AG04449 (cell line): ENCODE measurements at regions of chr3 and their contacts with region 1.

Region 1: DNA sequence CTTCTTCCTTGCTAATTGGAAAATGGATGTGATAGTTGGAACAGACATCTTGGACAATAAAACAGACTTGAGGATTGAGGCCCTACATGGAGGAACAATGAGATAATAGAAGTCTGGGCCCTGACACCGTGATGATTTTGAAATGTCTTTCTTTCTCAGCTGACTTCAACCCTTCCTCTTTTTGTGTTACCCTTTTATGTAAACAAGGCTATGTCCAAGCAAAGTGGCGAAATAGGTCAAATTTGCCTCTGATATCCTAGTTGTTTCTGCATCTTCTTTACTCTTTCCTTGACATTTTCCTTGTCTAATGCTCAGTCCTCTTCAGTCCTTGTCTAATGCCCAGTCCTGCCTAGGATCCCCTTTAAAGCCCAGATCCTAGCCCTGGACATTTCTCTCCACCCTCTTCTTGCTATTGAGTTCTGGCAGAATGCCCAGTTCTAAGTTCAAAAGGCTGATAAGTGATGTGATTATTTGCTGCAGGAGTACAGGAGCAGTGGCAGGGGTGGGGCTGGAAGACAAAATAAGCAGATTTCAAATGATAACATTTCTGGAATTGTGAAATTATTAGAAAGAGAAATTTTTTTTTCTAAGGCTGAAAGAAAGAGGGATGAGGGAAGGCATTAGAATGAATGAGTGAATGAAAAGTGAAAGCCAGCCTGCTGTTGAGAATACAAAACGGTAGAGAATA is 6.5 kb upstream of the VPS8 start:
- DNase-seq: no peak
- H3K4me3 ChIP-seq: no peak overlapping the region
- CTCF ChIP-seq: no peak

Region 2: GRCh38 chr3:184549793-184550577 is 255.5 kb before region 1 on chr3:
- CTCF ChIA-PET with region 1: interaction called, 10 read pairs
- POLR2A ChIA-PET with region 1: no interaction called
- DNase-seq: no peak
- H3K4me3 ChIP-seq: no peak overlapping the region
- CTCF ChIP-seq: no peak

Region 3: GRCh38 chr3:184786280-184786941 is 19.1 kb before region 1 on chr3:
- CTCF ChIA-PET with region 1: interaction called, 192 read pairs
- POLR2A ChIA-PET with region 1: interaction called, 4 read pairs
- DNase-seq: peak; percentile 77
- H3K4me3 ChIP-seq: peak overlapping the region; percentile 27
- CTCF ChIP-seq: no peak

Region 4: GRCh38 chr3:184822654-184823053 is 17.2 kb after region 1 on chr3:
- CTCF ChIA-PET with region 1: interaction called, 12 read pairs
- POLR2A ChIA-PET with region 1: no interaction called
- DNase-seq: no peak
- H3K4me3 ChIP-seq: no peak overlapping the region
- CTCF ChIP-seq: no peak